Heart right ventricle (tissue), 16 donors: ENCODE measurements at regions of chr2 and their contacts with region 1.

Region 1: DNA sequence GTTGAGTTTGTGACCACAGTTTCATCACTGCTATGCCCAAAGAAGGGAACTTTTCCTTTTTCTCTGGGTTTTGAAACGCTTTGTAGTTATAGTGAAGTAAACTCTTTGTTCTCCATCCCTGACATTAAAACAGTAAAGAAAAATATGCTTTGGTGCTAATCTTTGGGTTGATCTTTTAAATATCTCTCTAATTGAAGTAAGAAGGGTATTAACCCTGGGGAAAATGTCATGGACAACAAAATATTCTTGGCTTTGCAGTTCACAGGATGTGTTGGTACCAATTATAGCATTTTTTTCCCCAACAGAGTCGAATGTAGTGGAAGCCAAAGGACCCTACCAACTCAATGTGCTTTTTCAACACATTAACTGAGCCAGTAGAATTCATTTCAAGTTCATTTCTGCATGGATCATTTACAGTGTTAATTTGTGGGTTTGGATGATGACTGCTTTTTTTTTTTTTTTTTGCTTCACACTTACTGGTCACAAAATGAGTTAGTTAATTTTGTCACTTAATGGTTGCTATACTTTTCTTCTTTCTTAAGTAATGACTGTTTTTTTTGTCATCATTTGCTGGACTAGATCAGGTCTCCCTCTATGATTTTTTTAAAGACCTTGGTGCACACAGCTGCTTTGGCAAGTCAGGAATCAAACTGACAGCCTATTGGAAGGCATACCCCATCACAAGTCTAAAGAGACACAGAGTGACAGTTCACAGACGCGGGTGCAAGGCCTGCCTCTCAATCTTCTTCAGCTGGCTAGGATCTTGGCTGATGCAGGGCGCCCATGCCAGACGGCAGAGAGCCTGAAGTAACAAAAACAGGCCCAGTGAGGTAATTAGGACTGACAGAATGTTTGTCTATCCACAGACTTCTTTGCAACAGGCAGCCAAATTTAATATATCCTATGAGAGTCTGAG is 98.8 kb upstream of the MMADHC start:
- DNase-seq: peak in 1 of 2 donors; percentile 4
- ATAC-seq: peak in 2 of 8 donors; percentile 34 to 49
- H3K4me3 ChIP-seq: no peak overlapping the region
- H3K27ac ChIP-seq: no peak overlapping the region
- H3K4me1 ChIP-seq: no peaks in the 10 kb centered on the region
- H3K27me3 ChIP-seq: no peaks in the 10 kb centered on the region
- CTCF ChIP-seq: no peak

Region 2: GRCh38 chr2:149119368-149119767 is 567.0 kb before region 1 on chr2:
- intact Hi-C with region 1: no loop called
- DNase-seq: no peak
- ATAC-seq: no peak
- H3K4me3 ChIP-seq: no peak overlapping the region
- H3K27ac ChIP-seq: no peak overlapping the region
- H3K4me1 ChIP-seq: no peaks in the 10 kb centered on the region
- H3K27me3 ChIP-seq: peaks cover 0 to 17% (median 0%) of the 10 kb centered on the region in 7 donors
- CTCF ChIP-seq: no peak

Region 3: DNA sequence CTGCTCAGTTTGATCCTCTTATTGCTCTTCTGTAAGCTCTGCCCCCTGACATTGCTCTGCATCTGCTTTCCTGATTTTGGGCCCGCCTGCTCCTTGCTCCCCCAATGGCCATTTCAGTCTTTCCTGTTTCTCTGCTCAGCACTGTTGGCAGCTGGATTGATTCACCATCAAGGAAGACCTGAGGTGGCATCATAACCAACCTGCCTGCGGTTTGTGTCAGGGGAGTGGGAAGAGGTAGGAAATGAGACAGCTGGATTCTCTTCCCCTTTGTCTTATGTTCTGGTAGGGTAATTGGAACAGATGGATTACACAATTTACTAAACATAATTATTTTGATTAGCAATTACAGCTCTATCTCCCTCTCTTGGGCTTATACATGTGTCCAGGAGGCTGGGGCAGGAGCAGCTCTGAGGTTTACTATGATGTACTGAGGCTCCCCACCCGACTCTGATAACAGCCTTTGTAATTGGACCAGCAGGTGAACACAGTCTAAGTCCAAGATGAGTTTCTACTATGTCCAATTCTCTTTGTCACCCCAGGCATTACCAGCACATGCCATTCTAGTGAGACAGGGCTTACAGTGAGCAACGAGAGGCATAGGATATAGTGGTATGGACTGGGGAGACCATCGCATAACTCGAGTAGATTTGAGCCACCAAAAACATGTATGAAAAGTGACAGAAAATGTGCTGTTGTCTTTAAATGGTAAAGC is 52.9 kb after region 1 on chr2:
- intact Hi-C with region 1: loop called in 1 of 10 experiments (anchors 2 kb)
- DNase-seq: no peak
- ATAC-seq: no peak
- H3K4me3 ChIP-seq: no peak overlapping the region
- H3K27ac ChIP-seq: no peak overlapping the region
- H3K4me1 ChIP-seq: peaks cover 0 to 14% (median 0%) of the 10 kb centered on the region in 9 donors
- H3K27me3 ChIP-seq: no peaks in the 10 kb centered on the region
- CTCF ChIP-seq: no peak